ENCODE measurements at regions of chr11 and their contacts with region 1.

Region 1: DNA sequence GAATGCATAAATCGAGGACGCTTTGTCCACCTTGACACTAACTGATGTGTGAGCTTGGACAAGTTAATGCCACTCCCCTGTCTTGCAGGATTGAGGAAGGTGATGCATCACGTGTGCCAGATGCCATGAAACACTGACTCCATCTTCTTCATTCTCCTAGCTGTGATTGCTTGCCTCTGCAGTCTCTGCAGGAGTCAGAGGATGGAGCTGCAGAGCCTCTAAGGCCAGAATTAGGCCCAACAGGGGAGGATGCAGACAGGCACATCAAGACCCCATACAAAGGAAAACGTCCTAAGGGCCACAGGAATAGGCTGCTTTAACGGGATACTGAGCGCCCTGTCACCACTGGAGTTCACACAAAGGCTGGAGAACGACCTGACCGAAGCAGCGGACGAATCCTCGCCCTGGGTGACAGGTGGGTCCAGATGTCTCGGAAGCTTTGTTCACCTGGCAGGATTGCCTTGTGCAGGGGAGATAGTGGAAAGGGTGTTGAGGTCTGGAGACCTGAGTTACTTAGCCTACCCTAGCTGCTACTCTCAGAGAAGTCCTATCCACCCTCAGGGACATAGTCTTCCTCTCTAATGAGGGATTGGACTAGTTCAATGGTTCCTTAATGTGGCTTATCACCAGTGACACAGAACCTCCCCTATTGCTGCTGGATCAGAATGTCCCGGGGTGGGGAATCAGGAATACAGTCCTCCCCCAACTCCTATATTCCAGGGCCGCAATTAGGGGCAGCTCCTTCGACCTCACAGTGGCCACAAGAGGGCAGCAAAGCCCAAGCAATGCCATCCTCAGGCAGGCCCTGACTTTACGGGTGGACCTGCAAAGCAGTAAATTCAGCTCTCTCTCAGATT is 32.4 kb downstream of the DBX1 start:
- DNase-seq: no peak
- H3K4me3 ChIP-seq: no peak overlapping the region
- H3K27ac ChIP-seq: no peak overlapping the region
- H3K4me1 ChIP-seq: peaks cover 0 to 12% (median 5%) of the 10 kb centered on the region in 3 donors
- H3K27me3 ChIP-seq: peaks cover 0 to 14% (median 0%) of the 10 kb centered on the region in 4 donors
- CTCF ChIP-seq: peak; percentile 56 to 89 (median 82)
- POLR2A ChIP-seq: no peak

Region 2: GRCh38 chr11:19561011-19561410 is 566.9 kb before region 1 on chr11:
- intact Hi-C with region 1: loop called (anchors 10 kb)
- DNase-seq: no peak
- H3K4me3 ChIP-seq: no peak overlapping the region
- H3K27ac ChIP-seq: no peak overlapping the region
- H3K4me1 ChIP-seq: peaks cover 0 to 14% (median 6%) of the 10 kb centered on the region in 3 donors
- H3K27me3 ChIP-seq: peaks cover 0 to 8% (median 0%) of the 10 kb centered on the region in 4 donors
- CTCF ChIP-seq: no peak
- POLR2A ChIP-seq: no peak

Region 3: GRCh38 chr11:19679952-19680828 is 447.7 kb before region 1 on chr11:
- intact Hi-C with region 1: no loop called
- DNase-seq: no peak
- H3K4me3 ChIP-seq: peak overlapping the region in 1 of 4 donors; percentile 19
- H3K27ac ChIP-seq: peak overlapping the region; percentile 49 to 91 (median 77)
- H3K4me1 ChIP-seq: peaks cover 30 to 97% (median 57%) of the 10 kb centered on the region in 3 donors
- H3K27me3 ChIP-seq: no peaks in the 10 kb centered on the region
- CTCF ChIP-seq: peak in 2 of 6 experiments; percentile 26 to 46
- POLR2A ChIP-seq: no peak

Region 4: GRCh38 chr11:19951558-19952115 is 176.3 kb before region 1 on chr11:
- intact Hi-C with region 1: loop called (anchors 5 kb)
- DNase-seq: no peak
- H3K4me3 ChIP-seq: peak overlapping the region in 1 of 4 donors; percentile 27
- H3K27ac ChIP-seq: peak overlapping the region in 1 of 4 donors; percentile 3
- H3K4me1 ChIP-seq: peaks cover 0 to 37% (median 3%) of the 10 kb centered on the region in 3 donors
- H3K27me3 ChIP-seq: no peaks in the 10 kb centered on the region
- CTCF ChIP-seq: peak in 5 of 6 experiments; percentile 69 to 90 (median 69)
- POLR2A ChIP-seq: no peak

Region 5: DNA sequence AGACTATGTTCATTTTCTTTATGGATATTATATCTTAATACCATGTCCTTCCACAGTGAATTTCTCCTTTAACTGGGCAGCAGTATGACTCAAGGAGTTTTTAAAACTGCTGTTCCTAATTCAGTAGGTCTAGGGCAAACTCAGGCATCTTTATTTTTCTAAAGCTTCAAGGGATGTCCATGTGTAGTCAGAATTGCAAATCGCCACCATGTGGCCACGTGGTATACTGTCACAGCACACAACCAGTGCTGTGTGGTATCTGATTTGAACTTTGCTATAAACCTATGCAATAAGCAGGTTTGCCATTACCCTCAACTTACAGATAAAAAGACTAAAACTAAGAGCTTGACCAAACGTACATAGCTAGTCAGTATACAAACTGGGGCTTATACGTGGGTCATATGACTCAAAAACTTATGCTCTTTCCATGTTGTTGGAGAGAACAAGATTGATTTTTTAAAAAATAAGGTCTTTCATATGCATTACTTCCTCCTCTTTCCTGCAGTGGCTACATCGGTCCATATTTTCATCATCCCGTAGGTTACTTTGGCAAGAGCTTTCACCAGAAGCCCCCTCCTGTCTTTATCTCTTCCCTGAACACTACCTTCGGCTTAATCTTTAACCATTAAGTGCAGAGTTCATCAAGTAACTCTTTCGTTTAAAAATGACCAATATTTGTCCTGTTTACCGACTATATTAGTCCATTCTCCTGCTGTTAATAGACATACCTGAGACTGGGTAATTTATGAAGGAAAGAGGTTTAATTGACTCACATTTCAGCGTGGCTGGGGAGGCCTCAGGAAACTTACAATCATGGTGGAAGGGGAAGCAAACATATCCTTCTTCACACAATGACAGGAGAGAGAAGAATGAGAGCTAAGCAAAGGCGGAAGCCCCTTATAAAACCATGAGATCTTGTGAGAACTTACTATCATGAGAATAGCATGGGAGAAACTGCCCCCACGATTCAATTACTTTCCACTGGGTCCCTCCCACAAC is 227.6 kb after region 1 on chr11:
- intact Hi-C with region 1: loop called (anchors 10 kb)
- DNase-seq: no peak
- H3K4me3 ChIP-seq: no peak overlapping the region
- H3K27ac ChIP-seq: no peak overlapping the region
- H3K4me1 ChIP-seq: peaks cover 0 to 10% (median 0%) of the 10 kb centered on the region in 3 donors
- H3K27me3 ChIP-seq: peaks cover 0 to 4% (median 0%) of the 10 kb centered on the region in 4 donors
- CTCF ChIP-seq: peak in 5 of 6 experiments; percentile 40 to 62 (median 48)
- POLR2A ChIP-seq: no peak

Measured in esophagus squamous epithelium (tissue), 5 donors.